K562 (cell line): ENCODE measurements at regions of chr15 and their contacts with region 1.

Region 1: GRCh38 chr15:95712785-95713184 is 617.7 kb upstream of the NR2F2 start:
- DNase-seq: no peak
- ATAC-seq: no peak
- H3K4me3 ChIP-seq: no peak overlapping the region
- H3K27ac ChIP-seq: no peak overlapping the region
- H3K4me1 ChIP-seq: peaks cover 17 to 54% of the 10 kb centered on the region in 2 experiments
- H3K27me3 ChIP-seq: no peaks in the 10 kb centered on the region
- CTCF ChIP-seq: no peak
- EP300 ChIP-seq: no peak
- POLR2A ChIP-seq: no peak
- RAD21 ChIP-seq: no peak

Region 2: GRCh38 chr15:95644100-95644875 is 68.5 kb before region 1 on chr15:
- CTCF ChIA-PET with region 1: no interaction called
- POLR2A ChIA-PET with region 1: no interaction called
- in situ Hi-C with region 1: no loop called
- intact Hi-C with region 1: loop called (anchors 5 kb)
- DNase-seq: peak in 1 of 4 experiments; percentile 35
- ATAC-seq: no peak
- H3K4me3 ChIP-seq: no peak overlapping the region
- H3K27ac ChIP-seq: no peak overlapping the region
- H3K4me1 ChIP-seq: peaks cover 0 to 47% of the 10 kb centered on the region in 2 experiments; a peak in 2 of 5 replicates
- H3K27me3 ChIP-seq: no peaks in the 10 kb centered on the region
- CTCF ChIP-seq: no peak
- EP300 ChIP-seq: no peak
- POLR2A ChIP-seq: no peak
- RAD21 ChIP-seq: no peak

Region 3: GRCh38 chr15:95663146-95664100 is 49.4 kb before region 1 on chr15:
- CTCF ChIA-PET with region 1: no interaction called
- POLR2A ChIA-PET with region 1: no interaction called
- in situ Hi-C with region 1: no loop called
- intact Hi-C with region 1: no loop called
- DNase-seq: no peak
- ATAC-seq: no peak
- H3K4me3 ChIP-seq: no peak overlapping the region
- H3K27ac ChIP-seq: no peak overlapping the region
- H3K4me1 ChIP-seq: no peaks in the 10 kb centered on the region; a peak in 2 of 5 replicates
- H3K27me3 ChIP-seq: no peaks in the 10 kb centered on the region
- CTCF ChIP-seq: no peak
- EP300 ChIP-seq: no peak
- POLR2A ChIP-seq: no peak
- RAD21 ChIP-seq: no peak

Region 4: GRCh38 chr15:95684693-95685115 is 28.1 kb before region 1 on chr15:
- CTCF ChIA-PET with region 1: no interaction called
- POLR2A ChIA-PET with region 1: no interaction called
- in situ Hi-C with region 1: no loop called
- intact Hi-C with region 1: loop called (anchors 1 kb)
- DNase-seq: peak; percentile 44 to 82 (median 54)
- ATAC-seq: peak; percentile 91
- H3K4me3 ChIP-seq: no peak overlapping the region
- H3K27ac ChIP-seq: peak overlapping the region; percentile 80
- H3K4me1 ChIP-seq: peaks cover 3 to 17% of the 10 kb centered on the region in 2 experiments; a peak in 3 of 5 replicates
- H3K27me3 ChIP-seq: no peaks in the 10 kb centered on the region
- CTCF ChIP-seq: no peak
- EP300 ChIP-seq: peak; percentile 84
- POLR2A ChIP-seq: no peak
- RAD21 ChIP-seq: 0 out of 4 replicates have a peak, but pooled peaks of 1 of the 2 experiments have one; percentile 1